Caco-2 (cell line): ENCODE measurements at regions of chr20 and their contacts with region 1.

Region 1: GRCh38 chr20:36591854-36592641 is 13.5 kb upstream of the RAB5IF start:
- DNase-seq: peak; percentile 74 to 75
- H3K4me3 ChIP-seq: no peak overlapping the region
- H3K4me3 Mint-ChIP-seq: no peak overlapping the region
- H3K27ac Mint-ChIP-seq: peak overlapping the region; percentile 8
- H3K4me1 ChIP-seq: no peaks in the 10 kb centered on the region
- H3K4me1 Mint-ChIP-seq: no peaks in the 10 kb centered on the region
- H3K27me3 ChIP-seq: no peaks in the 10 kb centered on the region
- H3K27me3 Mint-ChIP-seq: no peaks in the 10 kb centered on the region
- CTCF ChIP-seq: peak; percentile 75

Region 2: GRCh38 chr20:36355469-36356171 is 236.4 kb before region 1 on chr20:
- CTCF ChIA-PET with region 1: no interaction called
- POLR2A ChIA-PET with region 1: no interaction called
- intact Hi-C with region 1: no loop called
- DNase-seq: no peak
- H3K4me3 ChIP-seq: no peak overlapping the region
- H3K4me3 Mint-ChIP-seq: no peak overlapping the region
- H3K27ac Mint-ChIP-seq: no peak overlapping the region
- H3K4me1 ChIP-seq: peaks cover 15% of the 10 kb centered on the region
- H3K4me1 Mint-ChIP-seq: peaks cover 22% of the 10 kb centered on the region
- H3K27me3 ChIP-seq: no peaks in the 10 kb centered on the region
- H3K27me3 Mint-ChIP-seq: peaks cover 7% of the 10 kb centered on the region
- CTCF ChIP-seq: no peak

Region 3: GRCh38 chr20:36506253-36506652 is 85.8 kb before region 1 on chr20:
- CTCF ChIA-PET with region 1: interaction called, 12 read pairs
- POLR2A ChIA-PET with region 1: no interaction called
- intact Hi-C with region 1: loop called (anchors 1 kb)
- DNase-seq: peak in 1 of 2 experiments; percentile 55
- H3K4me3 ChIP-seq: no peak overlapping the region
- H3K4me3 Mint-ChIP-seq: no peak overlapping the region
- H3K27ac Mint-ChIP-seq: no peak overlapping the region
- H3K4me1 ChIP-seq: no peaks in the 10 kb centered on the region
- H3K4me1 Mint-ChIP-seq: no peaks in the 10 kb centered on the region
- H3K27me3 ChIP-seq: no peaks in the 10 kb centered on the region
- H3K27me3 Mint-ChIP-seq: no peaks in the 10 kb centered on the region
- CTCF ChIP-seq: peak; percentile 58 to 73

Region 4: GRCh38 chr20:36519012-36519719 is 72.9 kb before region 1 on chr20:
- CTCF ChIA-PET with region 1: no interaction called
- POLR2A ChIA-PET with region 1: no interaction called
- intact Hi-C with region 1: no loop called
- DNase-seq: no peak
- H3K4me3 ChIP-seq: no peak overlapping the region
- H3K4me3 Mint-ChIP-seq: no peak overlapping the region
- H3K27ac Mint-ChIP-seq: no peak overlapping the region
- H3K4me1 ChIP-seq: no peaks in the 10 kb centered on the region
- H3K4me1 Mint-ChIP-seq: no peaks in the 10 kb centered on the region
- H3K27me3 ChIP-seq: no peaks in the 10 kb centered on the region
- H3K27me3 Mint-ChIP-seq: no peaks in the 10 kb centered on the region
- CTCF ChIP-seq: no peak

Region 5: GRCh38 chr20:36550797-36551299 is 41.2 kb before region 1 on chr20:
- CTCF ChIA-PET with region 1: interaction called, 8 read pairs
- POLR2A ChIA-PET with region 1: no interaction called
- intact Hi-C with region 1: loop called (anchors 1 kb)
- DNase-seq: no peak
- H3K4me3 ChIP-seq: no peak overlapping the region
- H3K4me3 Mint-ChIP-seq: no peak overlapping the region
- H3K27ac Mint-ChIP-seq: no peak overlapping the region
- H3K4me1 ChIP-seq: no peaks in the 10 kb centered on the region
- H3K4me1 Mint-ChIP-seq: no peaks in the 10 kb centered on the region
- H3K27me3 ChIP-seq: no peaks in the 10 kb centered on the region
- H3K27me3 Mint-ChIP-seq: peaks cover 2% of the 10 kb centered on the region
- CTCF ChIP-seq: no peak

Region 6: GRCh38 chr20:36562724-36563123 is 29.3 kb before region 1 on chr20:
- CTCF ChIA-PET with region 1: interaction called, 16 read pairs
- POLR2A ChIA-PET with region 1: no interaction called
- intact Hi-C with region 1: no loop called
- DNase-seq: no peak
- H3K4me3 ChIP-seq: no peak overlapping the region
- H3K4me3 Mint-ChIP-seq: no peak overlapping the region
- H3K27ac Mint-ChIP-seq: no peak overlapping the region
- H3K4me1 ChIP-seq: peaks cover 8% of the 10 kb centered on the region; the same call in 1 of the 2 replicates
- H3K4me1 Mint-ChIP-seq: peaks cover 7% of the 10 kb centered on the region
- H3K27me3 ChIP-seq: no peaks in the 10 kb centered on the region
- H3K27me3 Mint-ChIP-seq: no peaks in the 10 kb centered on the region
- CTCF ChIP-seq: no peak

Region 7: GRCh38 chr20:36573103-36573794 is 18.8 kb before region 1 on chr20 and contains the start of gene TGIF2:
- CTCF ChIA-PET with region 1: interaction called, 22 read pairs
- POLR2A ChIA-PET with region 1: interaction called, 11 read pairs
- intact Hi-C with region 1: loop called (anchors 1 kb)
- DNase-seq: peak; percentile 96 to 99
- H3K4me3 ChIP-seq: peak within 1 kb of the TSS; percentile 82
- H3K4me3 Mint-ChIP-seq: peak within 1 kb of the TSS; percentile 79
- H3K27ac Mint-ChIP-seq: peak within 1 kb of the TSS; percentile 63
- H3K4me1 ChIP-seq: peaks cover 29% of the 10 kb centered on the region
- H3K4me1 Mint-ChIP-seq: peaks cover 12% of the 10 kb centered on the region
- H3K27me3 ChIP-seq: no peaks in the 10 kb centered on the region
- H3K27me3 Mint-ChIP-seq: no peaks in the 10 kb centered on the region
- CTCF ChIP-seq: no peak
- total RNA-seq, gene TGIF2: 58.4 and 60.6 TPM in 2 replicates

Region 8: DNA sequence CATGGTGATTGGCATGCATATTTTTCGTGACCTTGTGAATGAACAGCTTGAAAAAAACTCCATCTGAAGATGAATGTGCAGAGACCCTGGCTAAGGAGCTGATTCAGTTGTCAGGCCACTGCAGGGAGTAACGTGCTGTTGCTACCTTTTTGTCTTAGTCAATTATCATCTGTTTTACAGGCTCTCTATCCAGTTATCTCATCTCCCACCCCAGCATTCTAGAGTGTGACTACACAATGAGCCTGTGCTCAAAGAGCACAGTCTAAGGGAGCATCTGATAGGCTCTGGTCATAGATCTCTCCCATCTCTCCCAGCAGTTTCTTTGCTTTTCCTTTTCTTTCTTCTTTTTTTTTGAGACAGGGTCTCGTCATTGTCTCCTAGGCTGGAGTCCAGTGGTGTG is 108.4 kb after region 1 on chr20:
- CTCF ChIA-PET with region 1: no interaction called
- POLR2A ChIA-PET with region 1: no interaction called
- intact Hi-C with region 1: no loop called
- DNase-seq: no peak
- H3K4me3 ChIP-seq: no peak overlapping the region
- H3K4me3 Mint-ChIP-seq: no peak overlapping the region
- H3K27ac Mint-ChIP-seq: no peak overlapping the region
- H3K4me1 ChIP-seq: no peaks in the 10 kb centered on the region
- H3K4me1 Mint-ChIP-seq: no peaks in the 10 kb centered on the region
- H3K27me3 ChIP-seq: no peaks in the 10 kb centered on the region
- H3K27me3 Mint-ChIP-seq: no peaks in the 10 kb centered on the region
- CTCF ChIP-seq: no peak

Region 9: DNA sequence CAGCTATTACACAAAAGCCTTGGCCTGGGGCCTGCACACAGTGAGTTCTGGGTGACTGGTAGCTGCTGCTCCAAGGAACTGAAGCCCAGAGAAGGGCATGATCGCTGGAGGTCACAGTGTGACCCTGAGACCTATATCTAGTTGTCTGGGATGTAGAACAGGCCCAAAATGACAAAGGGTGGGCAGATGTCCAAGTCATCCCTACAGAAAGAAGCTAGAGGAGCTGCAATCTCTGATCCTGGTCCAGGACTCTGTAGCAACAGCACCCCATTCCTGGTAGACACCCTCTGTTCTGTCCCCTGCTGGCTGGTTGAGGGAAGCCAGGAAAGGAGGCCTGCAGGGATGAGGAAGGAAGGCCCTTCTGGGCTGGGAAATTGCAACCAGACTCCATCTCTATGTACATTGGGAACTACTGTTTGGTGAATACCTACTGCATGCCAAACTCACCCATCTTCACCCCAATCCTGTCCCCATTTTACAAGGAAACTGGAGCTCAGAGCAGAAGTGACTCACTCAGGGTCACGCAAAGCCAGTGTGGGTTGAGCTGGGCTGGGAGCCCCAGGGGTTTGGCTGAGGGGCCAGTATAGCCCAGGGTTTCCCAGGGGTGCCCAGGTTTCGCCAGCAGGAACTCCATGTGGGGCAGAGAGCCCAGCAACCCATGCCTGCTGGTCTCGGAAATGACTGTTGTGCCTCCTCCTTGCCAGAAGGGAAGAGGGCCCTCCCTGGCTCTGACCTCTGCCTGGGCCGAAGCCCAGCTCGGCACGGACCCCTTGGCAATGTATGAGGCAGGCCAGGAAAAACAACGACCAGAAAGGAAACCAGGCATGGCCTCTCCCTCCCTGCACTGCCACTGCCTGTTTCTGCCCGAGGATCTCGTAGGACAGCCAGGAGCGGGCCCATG is 239.0 kb after region 1 on chr20:
- CTCF ChIA-PET with region 1: no interaction called
- POLR2A ChIA-PET with region 1: no interaction called
- intact Hi-C with region 1: no loop called
- DNase-seq: no peak
- H3K4me3 ChIP-seq: no peak overlapping the region
- H3K4me3 Mint-ChIP-seq: no peak overlapping the region
- H3K27ac Mint-ChIP-seq: no peak overlapping the region
- H3K4me1 ChIP-seq: no peaks in the 10 kb centered on the region
- H3K4me1 Mint-ChIP-seq: peaks cover 7% of the 10 kb centered on the region
- H3K27me3 ChIP-seq: no peaks in the 10 kb centered on the region
- H3K27me3 Mint-ChIP-seq: no peaks in the 10 kb centered on the region
- CTCF ChIP-seq: peak in 1 of 2 experiments; percentile 39